ENCODE measurements at regions of chr9 and their contacts with region 1.

Region 1: DNA sequence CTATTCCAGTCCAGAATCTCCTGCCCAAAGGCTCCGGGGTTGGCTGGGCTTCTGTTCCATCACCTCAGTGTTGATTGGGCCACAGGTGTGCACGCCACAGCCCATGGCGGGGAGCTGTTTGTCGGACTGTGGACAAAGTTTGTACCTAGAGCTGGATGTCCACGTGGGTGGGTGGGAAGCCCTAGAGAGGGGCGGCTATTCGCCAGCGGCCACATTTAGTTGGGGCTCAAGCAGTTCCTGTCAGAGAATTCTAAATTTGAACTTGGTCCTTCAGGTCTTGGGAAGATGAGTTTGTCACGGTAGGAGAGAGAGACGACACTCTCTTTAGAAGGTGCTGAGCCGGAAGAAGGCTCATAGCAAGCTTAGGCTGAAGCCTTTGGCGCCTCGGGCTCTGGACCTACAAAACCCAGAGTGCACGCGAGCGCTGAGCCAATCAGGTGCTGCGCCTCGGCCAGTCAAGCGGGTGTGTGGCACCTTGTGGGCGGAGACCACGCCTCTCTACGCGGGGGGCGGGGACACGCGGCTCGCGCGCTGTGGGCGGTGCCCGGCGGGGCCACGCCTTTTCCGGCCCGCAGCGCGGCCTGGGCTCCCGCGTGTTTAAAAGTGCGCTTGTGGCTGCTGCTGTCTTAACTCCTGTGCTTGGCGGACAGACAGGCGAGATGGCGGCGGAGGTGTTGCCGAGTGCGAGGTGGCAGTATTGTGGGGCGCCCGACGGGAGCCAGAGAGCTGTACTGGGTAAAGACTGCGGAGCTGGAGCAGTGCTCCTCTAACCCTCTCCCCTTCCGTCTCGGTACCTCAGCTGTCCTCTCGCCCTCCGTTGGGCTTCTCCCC is at the start of gene POLR1E:
- DNase-seq: peak; percentile 96
- ATAC-seq: peak; percentile 99
- H3K4me3 ChIP-seq: peak within 1 kb of the TSS; percentile 27 to 93 (median 89)
- H3K4me3 Mint-ChIP-seq: peak within 1 kb of the TSS; percentile 94
- H3K27ac ChIP-seq: peak within 1 kb of the TSS; percentile 57 to 62
- H3K27ac Mint-ChIP-seq: peak within 1 kb of the TSS; percentile 95
- H3K4me1 ChIP-seq: peaks cover 24 to 26% of the 10 kb centered on the region in 2 donors
- H3K4me1 Mint-ChIP-seq: peaks cover 32% of the 10 kb centered on the region
- H3K27me3 ChIP-seq: peaks cover 0 to 4% (median 2%) of the 10 kb centered on the region in 4 experiments
- H3K27me3 Mint-ChIP-seq: peaks cover 6% of the 10 kb centered on the region
- CTCF ChIP-seq: no peak
- total RNA-seq, gene POLR1E: 30.3 and 31.0 TPM in 2 replicates

Region 2: GRCh38 chr9:37528652-37529510 is 43.3 kb after region 1 on chr9:
- CTCF ChIA-PET with region 1: no interaction called
- POLR2A ChIA-PET with region 1: no interaction called
- intact Hi-C with region 1: no loop called
- DNase-seq: peak; percentile 82
- ATAC-seq: peak; percentile 80
- H3K4me3 ChIP-seq: no peak overlapping the region
- H3K4me3 Mint-ChIP-seq: peak overlapping the region; percentile 78
- H3K27ac ChIP-seq: peak overlapping the region in 1 of 2 donors; percentile 39
- H3K27ac Mint-ChIP-seq: peak overlapping the region; percentile 84
- H3K4me1 ChIP-seq: peaks cover 0 to 28% of the 10 kb centered on the region in 2 donors
- H3K4me1 Mint-ChIP-seq: peaks cover 37% of the 10 kb centered on the region
- H3K27me3 ChIP-seq: no peaks in the 10 kb centered on the region
- H3K27me3 Mint-ChIP-seq: no peaks in the 10 kb centered on the region
- CTCF ChIP-seq: no peak

Region 3: DNA sequence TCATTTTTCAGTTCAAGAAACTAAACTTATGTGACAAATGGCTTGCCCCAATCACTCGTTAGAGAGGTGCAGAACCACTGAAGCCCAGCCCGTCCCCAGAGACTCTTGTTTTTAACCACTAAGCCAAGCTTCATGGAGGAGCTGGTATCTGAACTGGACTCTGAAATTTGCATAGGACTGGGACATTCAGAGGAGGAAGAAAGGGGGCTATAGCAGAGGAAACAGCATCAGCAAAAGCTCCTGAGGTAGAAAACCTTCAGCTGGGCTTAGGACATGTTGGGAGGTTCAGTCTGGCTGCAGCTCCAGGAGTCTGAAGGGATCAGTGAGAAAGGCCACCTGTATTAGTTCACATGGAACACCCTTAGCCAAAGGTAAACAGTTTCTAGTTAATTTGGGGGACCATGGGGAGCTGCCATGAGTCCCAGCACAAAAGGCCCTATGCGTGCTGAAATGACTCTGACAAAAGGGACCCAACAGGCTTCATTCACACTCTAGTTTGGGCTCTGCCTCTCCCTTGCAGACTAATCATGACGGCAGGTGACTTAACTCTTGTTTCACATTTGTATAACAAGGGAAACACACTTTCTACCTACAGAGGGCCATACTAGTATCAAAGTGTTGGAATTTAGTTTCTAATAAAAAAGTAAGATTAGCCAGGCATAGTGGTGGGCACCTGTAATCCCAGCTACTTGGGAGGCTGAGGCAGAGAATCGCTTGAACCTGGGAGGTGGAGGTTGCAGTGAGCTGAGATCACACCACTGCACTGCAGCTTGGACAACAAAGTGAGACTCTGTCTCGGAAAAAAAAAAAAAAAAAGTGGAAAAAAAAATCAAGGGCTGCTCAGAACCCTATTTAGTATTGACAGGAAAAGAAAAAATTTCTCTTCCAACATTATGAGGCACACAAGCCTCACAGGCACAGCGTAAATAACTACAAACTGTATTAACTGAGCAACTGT is 80.3 kb after region 1 on chr9:
- CTCF ChIA-PET with region 1: interaction called, 5 read pairs
- POLR2A ChIA-PET with region 1: no interaction called
- intact Hi-C with region 1: loop called (anchors 5 kb)
- DNase-seq: peak; percentile 73
- ATAC-seq: peak; percentile 94
- H3K4me3 ChIP-seq: peak overlapping the region in 3 of 5 experiments; percentile 9 to 52 (median 33)
- H3K4me3 Mint-ChIP-seq: peak overlapping the region; percentile 83
- H3K27ac ChIP-seq: peak overlapping the region; percentile 70
- H3K27ac Mint-ChIP-seq: peak overlapping the region; percentile 94
- H3K4me1 ChIP-seq: peaks cover 59 to 76% of the 10 kb centered on the region in 2 donors
- H3K4me1 Mint-ChIP-seq: peaks cover 78% of the 10 kb centered on the region
- H3K27me3 ChIP-seq: no peaks in the 10 kb centered on the region
- H3K27me3 Mint-ChIP-seq: no peaks in the 10 kb centered on the region
- CTCF ChIP-seq: no peak

Region 4: DNA sequence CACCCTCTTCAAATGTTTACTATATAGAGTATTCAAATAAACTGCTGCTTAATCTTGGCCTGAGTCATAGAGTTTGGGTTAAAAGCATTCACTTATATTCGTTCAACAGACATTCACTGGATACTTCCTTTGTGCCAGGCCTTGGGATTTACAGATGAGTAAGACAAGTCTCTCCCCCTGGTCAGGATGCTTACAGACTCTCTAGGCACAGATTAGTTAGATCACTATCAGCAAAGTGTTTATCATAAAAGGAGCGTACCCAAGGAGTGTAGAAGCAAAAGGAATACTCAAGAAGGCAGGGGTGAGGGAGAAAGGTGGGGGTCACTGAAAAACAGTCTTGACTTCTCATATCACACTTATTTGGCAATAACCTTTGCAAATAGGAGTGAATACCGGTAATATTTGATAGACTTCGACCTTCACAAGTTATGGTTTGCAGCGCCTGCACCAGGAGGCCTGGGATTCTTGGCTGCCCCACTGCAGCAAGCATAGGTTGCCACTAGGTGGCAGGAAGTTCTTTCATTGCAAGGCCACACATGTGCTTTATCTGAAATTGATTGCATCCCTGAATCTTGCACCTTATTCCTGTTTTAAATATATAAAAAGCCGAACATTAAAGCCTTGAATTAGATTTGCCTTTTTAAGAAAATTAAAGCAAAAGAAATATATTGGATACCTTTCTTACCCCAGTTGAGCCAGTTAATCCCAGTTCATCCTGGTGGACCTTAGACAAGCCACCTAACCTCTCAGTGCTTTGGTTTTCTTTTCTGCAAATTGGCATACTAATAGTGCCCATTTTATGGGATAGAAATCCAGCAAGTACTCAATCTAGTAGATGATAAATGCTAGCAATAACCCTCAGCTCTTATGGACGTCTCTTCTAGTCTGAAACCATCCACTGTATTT is 261.5 kb after region 1 on chr9:
- CTCF ChIA-PET with region 1: no interaction called
- POLR2A ChIA-PET with region 1: no interaction called
- intact Hi-C with region 1: loop called (anchors 2 kb)
- DNase-seq: peak; percentile 65
- ATAC-seq: peak; percentile 80
- H3K4me3 ChIP-seq: no peak overlapping the region
- H3K4me3 Mint-ChIP-seq: no peak overlapping the region
- H3K27ac ChIP-seq: no peak overlapping the region
- H3K27ac Mint-ChIP-seq: no peak overlapping the region
- H3K4me1 ChIP-seq: no peaks in the 10 kb centered on the region
- H3K4me1 Mint-ChIP-seq: no peaks in the 10 kb centered on the region
- H3K27me3 ChIP-seq: peaks cover 0 to 5% (median 0%) of the 10 kb centered on the region in 4 experiments
- H3K27me3 Mint-ChIP-seq: no peaks in the 10 kb centered on the region
- CTCF ChIP-seq: peak; percentile 92

Region 5: GRCh38 chr9:37903647-37904444 is 418.2 kb after region 1 on chr9 and contains the start of gene SLC25A51:
- CTCF ChIA-PET with region 1: no interaction called
- POLR2A ChIA-PET with region 1: no interaction called
- intact Hi-C with region 1: loop called (anchors 5 kb)
- DNase-seq: peak; percentile 98
- ATAC-seq: peak; percentile 88
- H3K4me3 ChIP-seq: peak within 1 kb of the TSS; percentile 60 to 83 (median 79)
- H3K4me3 Mint-ChIP-seq: peak within 1 kb of the TSS; percentile 94
- H3K27ac ChIP-seq: peak within 1 kb of the TSS; percentile 71 to 78
- H3K27ac Mint-ChIP-seq: peak within 1 kb of the TSS; percentile 96
- H3K4me1 ChIP-seq: peaks cover 14 to 20% of the 10 kb centered on the region in 2 donors
- H3K4me1 Mint-ChIP-seq: peaks cover 20% of the 10 kb centered on the region
- H3K27me3 ChIP-seq: no peaks in the 10 kb centered on the region
- H3K27me3 Mint-ChIP-seq: no peaks in the 10 kb centered on the region
- CTCF ChIP-seq: peak; percentile 82
- total RNA-seq, gene SLC25A51: 27.8 and 28.1 TPM in 2 replicates

Measured in B cell (primary cell).